ENCODE measurements at regions of chr19 and their contacts with region 1.

Region 1: DNA sequence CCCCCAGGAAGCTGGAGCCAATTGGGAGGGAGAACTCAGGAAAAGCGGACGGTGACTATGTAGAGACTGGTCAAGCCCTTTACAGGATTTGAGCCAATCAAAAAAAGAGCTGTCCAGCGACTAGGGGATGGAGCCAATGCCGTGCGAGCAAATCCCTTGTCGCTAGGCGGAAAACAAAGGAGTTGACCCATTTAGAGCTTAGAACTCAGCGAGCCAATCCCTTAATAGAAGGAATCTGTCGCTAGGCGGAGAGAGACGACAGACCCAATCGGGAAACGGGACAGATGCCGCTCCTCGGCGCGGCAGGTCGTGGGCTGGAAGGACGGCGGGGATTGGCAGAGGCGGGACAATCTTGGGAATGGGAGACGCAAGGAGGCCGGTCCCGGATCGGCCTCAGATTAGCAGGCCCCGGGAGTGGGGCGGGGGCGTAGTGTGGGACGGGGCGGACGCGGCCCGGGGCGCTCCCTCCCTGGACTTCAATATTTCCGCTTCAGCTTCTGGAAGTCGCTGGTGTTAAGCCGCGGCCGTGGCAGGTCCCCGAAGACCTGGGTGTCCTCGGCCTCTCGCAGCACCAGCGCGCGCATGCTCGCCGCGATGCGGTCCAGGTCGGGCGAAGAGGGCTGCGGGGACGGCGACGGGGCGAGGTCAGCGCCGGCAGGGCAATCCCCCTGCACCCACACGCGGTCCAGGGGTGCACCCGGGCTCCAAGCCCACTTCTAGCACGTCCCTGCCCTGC is 2.2 kb upstream of the PNKP start:
- DNase-seq: peak; percentile 99
- H3K4me3 ChIP-seq: peak overlapping the region; percentile 61
- CTCF ChIP-seq: no peak

Region 2: GRCh38 chr19:49808711-49809159 is 60.9 kb before region 1 on chr19:
- CTCF ChIA-PET with region 1: no interaction called
- POLR2A ChIA-PET with region 1: no interaction called
- DNase-seq: no peak
- H3K4me3 ChIP-seq: peak overlapping the region; percentile 76
- CTCF ChIP-seq: no peak

Region 3: GRCh38 chr19:49850473-49851342 is 18.9 kb before region 1 on chr19 and contains the start of gene PTOV1:
- CTCF ChIA-PET with region 1: interaction called, 4 read pairs
- POLR2A ChIA-PET with region 1: interaction called, 10 read pairs
- DNase-seq: no peak
- H3K4me3 ChIP-seq: peak within 1 kb of the TSS; percentile 85
- CTCF ChIP-seq: no peak

Region 4: GRCh38 chr19:49858031-49858991 is 11.3 kb before region 1 on chr19:
- CTCF ChIA-PET with region 1: interaction called, 4 read pairs
- POLR2A ChIA-PET with region 1: interaction called, 13 read pairs
- DNase-seq: no peak
- H3K4me3 ChIP-seq: no peak overlapping the region
- CTCF ChIP-seq: no peak

Measured in AG04449 (cell line).